ENCODE measurements at regions of chr10 and their contacts with region 1.

Region 1: DNA sequence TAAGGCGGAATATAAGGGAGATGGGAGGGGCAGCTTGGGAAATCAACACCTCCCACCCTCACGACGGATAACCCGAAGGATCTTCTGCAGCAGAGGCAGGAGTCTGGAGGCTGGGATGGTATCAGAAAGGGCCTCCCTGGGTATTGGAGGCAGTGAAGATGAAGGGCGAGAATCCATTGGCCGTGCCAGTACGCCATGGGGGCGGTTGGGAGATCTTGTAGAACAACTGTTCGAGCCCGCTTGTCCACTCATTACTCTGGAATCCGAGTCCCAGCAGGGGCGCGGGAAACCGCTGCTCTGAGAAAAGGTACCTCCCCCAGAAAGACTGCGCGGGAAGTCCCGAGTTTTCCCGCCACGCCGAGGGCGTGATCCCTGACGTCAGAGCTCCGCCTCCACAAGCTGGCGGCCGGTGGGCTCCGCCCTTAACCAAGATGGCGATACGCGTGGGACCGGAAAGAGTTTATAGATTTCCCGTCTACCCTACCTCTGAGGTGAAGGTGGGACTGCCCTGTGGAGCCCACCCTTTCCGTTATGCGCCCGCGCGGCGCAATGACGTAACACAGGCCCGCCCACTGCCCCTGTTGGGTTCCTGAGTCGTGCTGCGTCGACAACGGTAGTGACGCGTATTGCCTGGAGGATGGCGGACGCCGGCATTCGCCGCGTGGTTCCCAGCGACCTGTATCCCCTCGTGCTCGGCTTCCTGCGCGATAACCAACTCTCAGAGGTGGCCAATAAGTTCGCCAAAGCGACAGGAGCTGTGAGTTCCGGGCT is at the start of gene NOLC1:
- DNase-seq: peak; percentile 99
- H3K4me3 ChIP-seq: peak within 1 kb of the TSS; percentile 73
- H3K27ac ChIP-seq: peak within 1 kb of the TSS; percentile 93
- H3K4me1 ChIP-seq: peaks cover 7% of the 10 kb centered on the region
- H3K27me3 ChIP-seq: no peaks in the 10 kb centered on the region
- CTCF ChIP-seq: no peak
- total RNA-seq, gene NOLC1: 194 and 225 TPM in 2 replicates

Region 2: DNA sequence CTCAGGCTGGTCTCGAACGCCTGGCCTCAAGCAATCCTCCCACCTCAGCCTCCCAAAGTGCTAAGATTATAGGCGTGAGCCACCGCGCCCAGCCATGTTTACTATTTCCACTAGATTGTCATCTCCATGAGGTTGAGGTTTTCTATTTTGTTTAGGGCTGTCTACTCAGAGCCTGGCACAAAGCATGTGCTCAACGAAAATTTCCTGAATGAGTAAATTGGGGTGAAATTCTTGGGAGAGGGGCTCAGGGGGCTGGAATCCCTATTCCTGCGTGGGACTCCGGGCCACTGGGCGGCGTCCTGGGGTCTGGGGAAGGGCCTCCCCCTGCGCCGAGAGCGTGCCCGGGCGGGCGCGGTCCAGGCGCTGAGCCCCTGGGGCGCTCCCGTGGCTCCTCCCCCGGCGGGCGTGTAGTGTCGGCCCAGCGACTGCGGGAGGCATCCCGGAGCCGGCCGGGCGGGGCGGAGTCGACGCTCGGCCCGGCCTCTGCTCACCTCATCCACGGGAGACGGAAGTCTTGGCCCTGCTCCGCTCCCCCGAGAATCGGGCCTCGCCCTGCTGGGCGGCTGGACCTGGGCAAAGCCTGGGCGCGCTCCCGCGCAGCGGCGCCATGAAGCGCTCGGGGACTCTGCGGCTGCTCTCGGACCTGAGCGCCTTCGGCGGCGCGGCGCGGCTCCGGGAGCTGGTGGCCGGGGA is 86.9 kb before region 1 on chr10 and contains the start of gene HPS6:
- CTCF ChIA-PET with region 1: no interaction called
- POLR2A ChIA-PET with region 1: interaction called, 11 read pairs
- intact Hi-C with region 1: no loop called
- DNase-seq: peak; percentile 91
- H3K4me3 ChIP-seq: peak within 1 kb of the TSS; percentile 89
- H3K27ac ChIP-seq: peak within 1 kb of the TSS; percentile 80
- H3K4me1 ChIP-seq: peaks cover 9% of the 10 kb centered on the region
- H3K27me3 ChIP-seq: no peaks in the 10 kb centered on the region
- CTCF ChIP-seq: peak; percentile 25; the same call in 1 of the 2 replicates
- total RNA-seq, gene HPS6: 12.6 and 15.7 TPM in 2 replicates

Region 3: DNA sequence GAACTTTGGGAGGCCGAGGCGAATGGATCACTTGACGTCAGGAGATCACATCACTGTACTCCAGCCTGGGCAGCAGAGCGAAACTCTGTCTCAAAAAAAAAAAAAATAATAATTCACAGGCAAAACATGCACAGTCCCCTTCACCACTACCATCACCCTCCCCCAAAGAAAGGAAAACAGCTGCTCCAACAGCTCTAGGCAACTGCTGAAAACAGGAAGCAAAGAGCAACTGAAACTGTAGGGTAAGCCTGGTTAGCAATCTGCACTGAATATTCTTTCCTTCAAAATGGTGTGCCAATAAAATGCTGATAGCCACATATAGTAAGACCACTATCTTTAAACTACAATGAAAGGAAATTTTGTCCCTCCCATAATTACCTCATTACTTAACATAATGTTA is 1029.3 kb after region 1 on chr10:
- CTCF ChIA-PET with region 1: no interaction called
- POLR2A ChIA-PET with region 1: no interaction called
- intact Hi-C with region 1: no loop called
- DNase-seq: no peak
- H3K4me3 ChIP-seq: no peak overlapping the region
- H3K27ac ChIP-seq: no peak overlapping the region
- H3K4me1 ChIP-seq: no peaks in the 10 kb centered on the region
- H3K27me3 ChIP-seq: no peaks in the 10 kb centered on the region
- CTCF ChIP-seq: no peak

Measured in A673 (cell line).